Right ventricle myocardium inferior (tissue), 1 donor: ENCODE measurements at regions of chr19 and their contacts with region 1.

Region 1: DNA sequence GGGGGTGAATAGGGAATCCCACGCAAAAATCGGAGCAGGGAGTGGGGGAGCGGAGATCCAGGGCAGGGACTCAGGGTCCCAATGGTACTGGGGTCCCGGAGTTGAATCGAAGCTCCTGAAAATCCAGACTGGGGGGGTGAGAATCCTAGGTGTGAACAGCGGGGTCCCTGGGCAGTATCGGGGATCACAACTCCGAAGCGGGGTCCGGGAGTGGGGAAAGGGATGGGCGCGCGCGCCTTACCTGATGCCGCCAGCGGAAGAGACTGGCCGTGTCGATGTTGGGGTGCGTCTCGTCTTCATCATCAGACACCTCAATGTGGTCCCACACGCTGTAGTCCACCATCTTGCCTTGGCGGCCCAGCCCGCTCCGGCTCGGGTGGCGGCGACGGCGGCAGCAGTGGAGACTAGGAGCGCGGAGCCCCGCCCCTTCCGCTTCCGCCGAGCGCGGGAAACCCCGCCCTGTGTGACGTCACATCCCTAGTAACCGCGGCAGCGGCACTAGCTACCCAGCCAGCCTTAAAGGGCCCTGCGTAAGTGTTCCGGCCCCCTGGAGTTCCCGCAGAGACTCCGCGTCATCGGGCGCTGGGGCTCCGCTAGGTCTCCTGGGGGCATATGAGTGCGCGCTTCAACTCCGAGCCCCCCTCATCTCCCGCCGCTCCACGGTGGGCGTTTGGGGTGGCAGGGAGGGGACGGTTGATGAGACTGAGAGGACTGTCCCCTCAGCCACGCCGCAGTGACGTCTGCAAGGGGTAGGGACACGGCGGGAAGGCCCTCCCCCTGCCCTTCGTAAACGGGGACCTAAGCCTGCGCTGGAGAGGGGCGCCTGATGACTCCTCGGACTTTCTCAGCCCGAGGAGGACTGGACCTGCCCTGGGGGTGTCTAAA is at the start of gene CDC37:
- DNase-seq: peak; percentile 97
- ATAC-seq: peak; percentile 95
- total RNA-seq, gene CDC37: 155 TPM

Region 2: GRCh38 chr19:10346509-10346908 is 56.9 kb before region 1 on chr19:
- intact Hi-C with region 1: no loop called
- DNase-seq: peak; percentile 83
- ATAC-seq: peak; percentile 69

Region 3: DNA sequence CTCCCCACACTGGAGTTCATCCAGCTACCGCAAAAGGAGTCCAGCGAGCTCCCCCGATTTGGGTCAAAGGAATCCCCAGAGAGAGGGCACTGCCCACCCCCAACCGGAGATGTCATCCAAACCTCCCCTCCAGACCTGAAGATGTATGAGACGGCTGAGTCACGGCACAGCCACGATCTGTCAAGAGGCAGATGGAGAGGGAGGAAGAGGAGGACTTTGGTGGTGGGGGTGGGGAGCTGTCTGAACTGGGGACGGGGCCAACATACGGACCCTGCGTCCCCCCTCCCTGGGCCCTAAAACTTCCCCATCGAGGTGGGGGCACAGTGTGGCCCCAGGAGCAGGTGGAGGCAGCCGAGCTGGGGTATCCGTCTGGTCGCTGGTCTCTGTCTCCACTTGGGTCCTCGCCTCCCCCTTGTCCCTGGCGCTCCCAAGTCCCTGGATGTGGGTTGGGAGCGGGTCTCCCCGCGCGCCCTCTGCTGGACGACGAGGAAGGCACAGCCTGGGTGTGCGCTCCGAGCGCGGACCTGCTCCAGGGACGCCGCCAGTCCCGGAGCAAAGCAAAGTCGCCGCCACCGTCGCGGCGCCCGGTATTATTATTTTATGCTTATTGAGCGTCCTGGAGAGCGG is 20.7 kb after region 1 on chr19:
- intact Hi-C with region 1: loop called (anchors 2 kb)
- DNase-seq: peak; percentile 92
- ATAC-seq: peak; percentile 93

Region 4: DNA sequence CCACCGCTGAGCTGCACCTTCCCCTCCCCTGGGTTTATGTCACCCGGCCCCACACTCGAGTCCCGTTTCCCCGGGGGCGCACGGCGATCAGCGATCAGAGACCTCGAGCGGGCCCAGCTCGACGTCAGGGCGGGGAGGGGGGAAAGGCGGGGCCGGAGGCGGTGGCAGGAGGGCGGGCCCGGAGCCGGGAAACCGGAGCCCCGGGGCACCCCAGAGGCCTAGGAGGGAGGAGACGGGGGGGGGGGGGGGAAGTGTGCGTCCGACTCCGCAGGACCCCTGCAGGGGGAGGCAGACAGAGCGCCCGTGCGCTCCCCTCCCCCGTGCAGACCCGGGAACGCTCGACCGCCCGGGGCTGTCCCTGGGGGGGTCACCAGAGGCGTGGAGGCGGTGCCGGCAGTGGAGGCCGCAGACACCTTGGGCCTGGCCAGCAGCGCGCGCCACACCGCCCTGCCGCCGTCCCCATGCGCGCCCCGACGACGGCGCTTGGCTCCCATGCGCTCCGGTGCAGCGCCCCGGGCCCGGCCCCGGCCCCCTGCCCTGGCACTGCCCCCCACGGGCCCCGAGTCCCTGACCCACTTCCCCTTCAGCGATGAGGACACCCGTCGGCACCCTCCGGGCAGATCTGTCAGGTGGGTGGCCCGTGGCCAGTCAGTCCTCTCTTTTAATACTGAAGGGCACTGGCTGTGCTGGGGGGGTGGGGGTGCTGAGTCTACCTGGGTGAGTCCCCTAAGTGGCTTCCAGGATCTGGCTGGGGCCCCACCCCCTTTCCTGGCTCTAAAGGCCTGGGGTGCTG is 28.8 kb after region 1 on chr19:
- intact Hi-C with region 1: loop called (anchors 2 kb)
- DNase-seq: peak; percentile 84
- ATAC-seq: peak; percentile 74

Region 5: GRCh38 chr19:10442698-10443097 is 39.3 kb after region 1 on chr19:
- intact Hi-C with region 1: no loop called
- DNase-seq: no peak
- ATAC-seq: no peak

Region 6: GRCh38 chr19:10478903-10479384 is 75.6 kb after region 1 on chr19:
- intact Hi-C with region 1: loop called (anchors 5 kb)
- DNase-seq: peak; percentile 94
- ATAC-seq: peak; percentile 97